ENCODE measurements at regions of chr15 and their contacts with region 1.

Region 1: GRCh38 chr15:38868326-38869114 is 303.9 kb upstream of the RASGRP1 start:
- DNase-seq: no peak
- ATAC-seq: no peak
- H3K4me3 ChIP-seq: no peak overlapping the region
- H3K4me3 Mint-ChIP-seq: no peak overlapping the region
- H3K27ac ChIP-seq: no peak overlapping the region
- H3K27ac Mint-ChIP-seq: no peak overlapping the region
- H3K4me1 ChIP-seq: no peaks in the 10 kb centered on the region
- H3K4me1 Mint-ChIP-seq: no peaks in the 10 kb centered on the region
- H3K27me3 ChIP-seq: no peaks in the 10 kb centered on the region
- H3K27me3 Mint-ChIP-seq: peaks cover 31% of the 10 kb centered on the region
- CTCF ChIP-seq: no peak

Region 2: DNA sequence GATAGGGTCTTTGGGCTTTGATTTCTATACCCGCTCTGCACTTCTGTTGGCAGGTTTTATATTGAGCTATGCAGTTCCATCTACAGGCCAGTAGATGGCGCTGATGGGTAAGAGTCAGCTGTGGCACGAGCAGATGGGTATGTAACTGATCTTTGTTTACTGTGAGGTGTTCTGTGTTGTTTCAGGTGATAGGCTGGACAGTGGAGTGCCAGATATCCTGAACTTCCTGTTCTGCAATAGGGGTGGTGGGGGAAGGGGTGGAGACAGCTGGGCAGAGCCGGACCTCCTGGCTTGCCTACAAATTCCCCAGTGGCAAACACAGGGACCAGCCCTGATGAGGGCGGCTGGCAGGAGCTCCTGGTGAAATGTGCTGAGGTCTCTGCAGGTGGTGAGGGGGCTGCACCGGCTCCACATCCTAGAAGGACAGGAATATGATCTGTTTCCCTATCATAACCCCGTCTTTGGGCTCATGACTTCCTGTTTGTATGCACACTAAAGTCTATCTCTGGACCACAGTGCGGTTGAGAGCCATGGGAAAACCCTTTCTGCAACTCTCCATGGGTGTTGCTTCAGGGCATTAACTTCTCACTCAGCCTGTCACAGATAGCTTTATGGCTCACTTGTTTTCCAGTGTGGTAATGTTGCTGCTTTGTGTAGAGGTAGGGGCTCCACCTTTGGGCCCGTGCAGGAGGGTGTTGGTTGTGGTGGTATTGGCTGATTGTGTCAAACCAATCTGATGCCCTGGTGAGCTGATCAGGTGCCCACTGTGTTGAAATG is 428.0 kb before region 1 on chr15:
- CTCF ChIA-PET with region 1: no interaction called
- POLR2A ChIA-PET with region 1: no interaction called
- intact Hi-C with region 1: loop called (anchors 5 to 10 kb)
- DNase-seq: peak; percentile 10 to 88 (median 35)
- ATAC-seq: peak; percentile 96
- H3K4me3 ChIP-seq: no peak overlapping the region
- H3K4me3 Mint-ChIP-seq: no peak overlapping the region
- H3K27ac ChIP-seq: no peak overlapping the region
- H3K27ac Mint-ChIP-seq: no peak overlapping the region
- H3K4me1 ChIP-seq: peaks cover 7% of the 10 kb centered on the region
- H3K4me1 Mint-ChIP-seq: peaks cover 5% of the 10 kb centered on the region
- H3K27me3 ChIP-seq: peaks cover 0 to 7% of the 10 kb centered on the region in 2 experiments
- H3K27me3 Mint-ChIP-seq: peaks cover 37% of the 10 kb centered on the region
- CTCF ChIP-seq: peak; percentile 99

Region 3: GRCh38 chr15:38707802-38708671 is 160.5 kb before region 1 on chr15:
- CTCF ChIA-PET with region 1: no interaction called
- POLR2A ChIA-PET with region 1: no interaction called
- intact Hi-C with region 1: loop called in 1 of 2 experiments (anchors 5 kb)
- DNase-seq: peak in 6 of 14 experiments; percentile 9 to 76 (median 54)
- ATAC-seq: peak; percentile 98
- H3K4me3 ChIP-seq: no peak overlapping the region
- H3K4me3 Mint-ChIP-seq: no peak overlapping the region
- H3K27ac ChIP-seq: no peak overlapping the region
- H3K27ac Mint-ChIP-seq: no peak overlapping the region
- H3K4me1 ChIP-seq: no peaks in the 10 kb centered on the region
- H3K4me1 Mint-ChIP-seq: no peaks in the 10 kb centered on the region
- H3K27me3 ChIP-seq: no peaks in the 10 kb centered on the region
- H3K27me3 Mint-ChIP-seq: no peaks in the 10 kb centered on the region
- CTCF ChIP-seq: peak; percentile 71

Measured in CD4-positive, alpha-beta T cell (primary cell).